HepG2 (cell line): ENCODE measurements at regions of chr4 and their contacts with region 1.

Region 1: GRCh38 chr4:85370430-85371032 is 104.4 kb upstream of the ARHGAP24 start:
- DNase-seq: peak; percentile 31
- ATAC-seq: peak; percentile 99
- H3K4me3 ChIP-seq: no peak overlapping the region
- H3K27ac ChIP-seq: no peak overlapping the region
- H3K4me1 ChIP-seq: no peaks in the 10 kb centered on the region
- H3K27me3 ChIP-seq: no peaks in the 10 kb centered on the region
- CTCF ChIP-seq: peak; percentile 76
- EP300 ChIP-seq: no peak
- POLR2A ChIP-seq: no peak
- RAD21 ChIP-seq: peak; percentile 15; the same call in 1 of the 2 replicates

Region 2: GRCh38 chr4:85084380-85085094 is 286.0 kb before region 1 on chr4:
- CTCF ChIA-PET with region 1: interaction called, 8 read pairs
- POLR2A ChIA-PET with region 1: no interaction called
- in situ Hi-C with region 1: no loop called
- intact Hi-C with region 1: loop called (anchors 1 kb)
- DNase-seq: peak; percentile 60
- ATAC-seq: peak; percentile 80
- H3K4me3 ChIP-seq: no peak overlapping the region
- H3K27ac ChIP-seq: no peak overlapping the region
- H3K4me1 ChIP-seq: no peaks in the 10 kb centered on the region
- H3K27me3 ChIP-seq: no peaks in the 10 kb centered on the region
- CTCF ChIP-seq: peak; percentile 68
- EP300 ChIP-seq: no peak
- POLR2A ChIP-seq: no peak
- RAD21 ChIP-seq: no peak

Region 3: DNA sequence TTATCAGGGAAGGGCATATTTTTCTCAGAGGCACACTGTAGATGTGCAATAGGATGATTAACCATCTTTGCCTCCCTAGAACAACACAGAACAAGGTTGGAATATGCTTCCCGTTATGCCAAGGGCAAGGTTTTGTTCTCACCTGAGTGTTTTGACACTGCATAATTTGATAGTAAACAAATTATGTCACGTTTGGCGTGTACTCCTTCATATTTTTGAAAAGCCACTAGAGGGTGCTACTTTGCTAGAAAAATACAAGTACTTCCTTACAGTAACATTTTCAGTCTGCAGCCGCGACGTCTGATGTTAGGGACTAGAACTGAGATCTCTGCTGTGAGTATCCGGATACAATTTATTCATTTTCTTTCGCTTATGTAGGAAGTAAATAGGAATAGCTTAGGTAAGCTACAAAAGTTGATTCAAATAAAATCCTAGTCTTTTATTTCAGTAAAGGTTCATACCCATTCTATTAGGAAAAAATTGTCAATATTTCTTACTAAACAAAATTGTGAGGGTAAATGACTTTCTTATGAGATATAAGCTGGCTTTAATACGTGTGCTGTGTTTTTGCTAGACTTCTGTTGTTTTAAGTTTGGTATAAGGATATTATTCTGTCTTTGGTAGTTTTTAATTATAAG is 223.0 kb before region 1 on chr4:
- CTCF ChIA-PET with region 1: interaction called, 7 read pairs
- POLR2A ChIA-PET with region 1: no interaction called
- in situ Hi-C with region 1: loop called (anchors 10 kb)
- intact Hi-C with region 1: loop called (anchors 1 kb)
- DNase-seq: peak; percentile 50
- ATAC-seq: peak; percentile 79
- H3K4me3 ChIP-seq: no peak overlapping the region
- H3K27ac ChIP-seq: no peak overlapping the region
- H3K4me1 ChIP-seq: no peaks in the 10 kb centered on the region
- H3K27me3 ChIP-seq: no peaks in the 10 kb centered on the region
- CTCF ChIP-seq: peak; percentile 68
- EP300 ChIP-seq: no peak
- POLR2A ChIP-seq: no peak
- RAD21 ChIP-seq: 0 out of 2 replicates have a peak, but pooled peaks have one; percentile 30

Region 4: DNA sequence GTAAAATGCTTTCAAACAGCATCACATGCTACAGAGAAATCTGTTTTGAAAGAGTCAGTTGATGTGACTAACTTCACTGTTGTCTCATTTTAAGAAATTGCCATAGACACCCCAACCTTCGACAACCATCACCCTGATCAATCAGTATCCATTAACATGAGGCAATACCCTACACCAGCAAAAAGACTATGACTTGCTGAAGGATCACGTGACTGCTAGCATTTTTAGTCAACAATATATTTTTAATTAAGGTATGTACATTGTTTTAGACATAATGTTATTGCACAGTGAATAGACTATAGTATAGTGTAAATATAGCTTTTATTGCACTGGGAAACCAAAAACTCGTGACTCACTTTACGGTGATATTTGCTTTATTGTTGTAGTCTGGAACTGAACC is 95.6 kb before region 1 on chr4:
- CTCF ChIA-PET with region 1: no interaction called
- POLR2A ChIA-PET with region 1: no interaction called
- in situ Hi-C with region 1: no loop called
- intact Hi-C with region 1: no loop called
- DNase-seq: no peak
- ATAC-seq: no peak
- H3K4me3 ChIP-seq: no peak overlapping the region
- H3K27ac ChIP-seq: no peak overlapping the region
- H3K4me1 ChIP-seq: no peaks in the 10 kb centered on the region
- H3K27me3 ChIP-seq: no peaks in the 10 kb centered on the region
- CTCF ChIP-seq: no peak
- EP300 ChIP-seq: no peak
- POLR2A ChIP-seq: no peak
- RAD21 ChIP-seq: no peak

Region 5: DNA sequence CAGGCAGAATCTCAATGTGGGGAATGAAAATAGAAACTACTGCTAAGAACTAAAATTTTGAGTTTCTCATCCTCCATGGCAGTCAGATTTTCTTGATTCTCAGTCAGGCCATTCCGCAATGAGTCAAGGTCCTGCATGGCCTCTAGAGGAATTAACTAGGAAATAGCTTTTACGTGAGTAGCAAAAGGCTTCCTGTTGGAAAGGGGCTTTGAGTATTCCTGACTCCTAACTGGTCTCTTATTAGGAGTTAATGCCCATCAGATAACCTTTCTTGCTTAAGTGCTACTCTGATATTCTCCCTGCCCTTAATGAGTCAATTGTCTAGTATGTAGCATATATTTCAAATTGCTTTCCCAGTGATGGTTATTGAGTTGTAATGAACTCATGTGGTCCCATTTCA is 38.7 kb after region 1 on chr4:
- CTCF ChIA-PET with region 1: no interaction called
- POLR2A ChIA-PET with region 1: no interaction called
- in situ Hi-C with region 1: no loop called
- intact Hi-C with region 1: no loop called
- DNase-seq: no peak
- ATAC-seq: no peak
- H3K4me3 ChIP-seq: no peak overlapping the region
- H3K27ac ChIP-seq: no peak overlapping the region
- H3K4me1 ChIP-seq: no peaks in the 10 kb centered on the region
- H3K27me3 ChIP-seq: no peaks in the 10 kb centered on the region
- CTCF ChIP-seq: no peak
- EP300 ChIP-seq: no peak
- POLR2A ChIP-seq: no peak
- RAD21 ChIP-seq: no peak